ENCODE measurements at regions of chr6 and their contacts with region 1.

Region 1: DNA sequence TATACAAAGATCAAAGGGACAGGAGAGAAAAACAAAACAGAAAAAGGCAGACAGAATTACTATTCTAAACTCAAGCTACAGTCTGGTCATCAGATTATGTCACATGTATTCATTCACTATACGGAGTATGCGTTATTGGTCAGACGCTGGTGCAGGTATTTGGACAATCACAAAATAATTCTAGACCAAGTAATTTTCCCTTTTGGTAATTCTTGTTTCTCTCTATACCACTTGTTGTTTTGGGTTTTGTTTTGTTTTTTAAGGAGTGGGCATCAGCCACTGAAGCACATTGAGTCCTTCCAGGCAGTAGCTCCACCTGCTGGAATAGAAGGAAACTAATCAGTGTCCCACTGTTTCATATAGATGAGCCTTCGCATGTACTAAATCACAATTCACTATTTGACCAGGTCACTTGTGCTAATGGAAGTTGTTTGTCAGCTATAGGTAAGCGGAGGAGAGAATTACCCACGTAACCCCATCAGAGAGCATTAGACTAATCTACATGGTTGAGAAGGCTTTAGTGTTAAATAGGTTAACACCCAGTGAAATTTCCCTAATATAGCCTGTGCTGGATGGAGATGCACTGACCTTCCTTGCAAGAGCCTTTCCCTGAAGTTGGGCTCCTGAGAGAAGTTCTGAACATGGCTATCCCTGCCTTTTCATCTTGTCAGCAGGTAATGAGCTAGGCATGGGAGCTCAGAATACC is 77.9 kb downstream of the TNFAIP3 start:
- DNase-seq: peak in 4 of 5 donors; percentile 41 to 56 (median 48)
- H3K4me3 ChIP-seq: no peak overlapping the region
- H3K4me3 Mint-ChIP-seq: peak overlapping the region in 1 of 8 donors; percentile 12
- H3K27ac ChIP-seq: no peak overlapping the region
- H3K27ac Mint-ChIP-seq: peak overlapping the region in 5 of 7 donors; percentile 10 to 67 (median 63)
- H3K4me1 ChIP-seq: peaks cover 16% of the 10 kb centered on the region
- H3K4me1 Mint-ChIP-seq: peaks cover 13 to 22% (median 19%) of the 10 kb centered on the region in 4 donors
- H3K27me3 ChIP-seq: no peaks in the 10 kb centered on the region
- H3K27me3 Mint-ChIP-seq: no peaks in the 10 kb centered on the region

Region 2: GRCh38 chr6:137661601-137662000 is 283.3 kb before region 1 on chr6:
- CTCF ChIA-PET with region 1: interaction called, 10 read pairs
- POLR2A ChIA-PET with region 1: no interaction called
- intact Hi-C with region 1: no loop called
- DNase-seq: peak in 3 of 5 donors; percentile 40 to 45 (median 45)
- H3K4me3 ChIP-seq: no peak overlapping the region
- H3K4me3 Mint-ChIP-seq: no peak overlapping the region
- H3K27ac ChIP-seq: no peak overlapping the region
- H3K27ac Mint-ChIP-seq: peak overlapping the region in 1 of 7 donors; percentile 51
- H3K4me1 ChIP-seq: no peaks in the 10 kb centered on the region
- H3K4me1 Mint-ChIP-seq: peaks cover 0 to 3% (median under 1%) of the 10 kb centered on the region in 4 donors
- H3K27me3 ChIP-seq: no peaks in the 10 kb centered on the region
- H3K27me3 Mint-ChIP-seq: peaks cover 0 to 4% of the 10 kb centered on the region in 2 donors

Region 3: DNA sequence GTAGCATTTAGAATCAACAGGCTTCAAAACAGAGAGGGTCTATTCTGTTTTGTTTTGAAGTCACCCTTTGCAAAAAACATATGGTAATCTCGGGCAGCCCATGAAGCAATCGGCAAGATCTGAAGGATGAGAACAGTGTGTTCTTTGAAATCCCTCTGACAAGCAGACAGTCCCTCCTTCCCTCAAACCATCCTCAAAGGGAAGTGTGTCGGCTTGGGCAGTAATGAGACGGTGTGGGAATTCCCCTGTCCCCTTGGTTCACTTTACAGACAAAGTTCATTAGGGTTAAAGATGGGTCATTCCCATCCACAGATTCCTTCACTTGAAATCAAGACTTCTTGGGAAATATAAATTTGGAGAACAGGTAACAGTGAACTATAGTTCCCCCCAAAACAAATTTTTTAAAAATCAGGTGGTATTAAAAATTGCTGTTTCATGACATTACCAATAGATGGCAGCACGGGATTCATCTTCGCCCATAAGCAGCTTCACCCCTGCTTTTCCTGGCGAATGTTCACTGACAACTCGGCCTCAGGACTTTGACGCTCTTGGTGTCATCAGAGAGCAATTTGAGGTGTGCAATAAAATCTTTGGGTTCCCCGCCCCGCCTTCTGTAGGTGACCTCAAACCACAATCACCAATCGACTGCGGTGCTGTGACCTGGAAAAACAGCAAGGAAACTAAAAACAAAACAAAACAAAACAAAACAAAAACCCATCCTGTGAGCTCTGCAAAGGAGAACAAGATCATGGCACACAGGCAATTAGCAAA is 237.2 kb before region 1 on chr6:
- CTCF ChIA-PET with region 1: interaction called, 74 read pairs
- POLR2A ChIA-PET with region 1: interaction called, 9 read pairs
- intact Hi-C with region 1: loop called (anchors 1 kb)
- DNase-seq: peak; percentile 91 to 97 (median 96)
- H3K4me3 ChIP-seq: peak overlapping the region in 1 of 2 donors; percentile 36
- H3K4me3 Mint-ChIP-seq: peak overlapping the region; percentile 58 to 80 (median 72)
- H3K27ac ChIP-seq: peak overlapping the region; percentile 77
- H3K27ac Mint-ChIP-seq: peak overlapping the region; percentile 93 to 99 (median 98)
- H3K4me1 ChIP-seq: peaks cover 68% of the 10 kb centered on the region
- H3K4me1 Mint-ChIP-seq: peaks cover 39 to 70% (median 57%) of the 10 kb centered on the region in 4 donors
- H3K27me3 ChIP-seq: no peaks in the 10 kb centered on the region
- H3K27me3 Mint-ChIP-seq: peaks cover 0 to under 1% of the 10 kb centered on the region in 2 donors

Region 4: DNA sequence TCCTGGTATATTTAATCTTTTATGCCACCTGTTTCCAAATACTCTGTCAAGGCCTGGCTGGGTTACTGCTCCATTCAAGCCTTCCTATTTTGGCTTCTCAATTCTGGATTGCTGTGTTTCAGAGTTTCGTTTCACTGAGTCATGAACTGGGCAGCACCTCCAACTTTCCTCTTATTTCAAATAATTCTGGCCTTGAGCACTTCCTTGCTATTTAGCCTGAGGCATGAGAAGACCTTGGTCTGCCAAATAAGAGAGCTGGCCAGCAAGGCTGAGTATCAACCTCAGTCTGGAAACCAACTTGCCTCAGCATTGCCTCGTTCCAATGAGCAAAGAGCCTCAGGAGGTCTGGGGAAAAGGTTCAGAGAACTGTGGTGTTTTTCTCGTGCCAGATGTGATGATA is 11.2 kb before region 1 on chr6:
- CTCF ChIA-PET with region 1: interaction called, 23 read pairs
- POLR2A ChIA-PET with region 1: no interaction called
- intact Hi-C with region 1: no loop called
- DNase-seq: no peak
- H3K4me3 ChIP-seq: no peak overlapping the region
- H3K4me3 Mint-ChIP-seq: no peak overlapping the region
- H3K27ac ChIP-seq: no peak overlapping the region
- H3K27ac Mint-ChIP-seq: no peak overlapping the region
- H3K4me1 ChIP-seq: peaks cover 3% of the 10 kb centered on the region
- H3K4me1 Mint-ChIP-seq: peaks cover 1 to 2% (median 2%) of the 10 kb centered on the region in 4 donors
- H3K27me3 ChIP-seq: no peaks in the 10 kb centered on the region
- H3K27me3 Mint-ChIP-seq: no peaks in the 10 kb centered on the region

Region 5: DNA sequence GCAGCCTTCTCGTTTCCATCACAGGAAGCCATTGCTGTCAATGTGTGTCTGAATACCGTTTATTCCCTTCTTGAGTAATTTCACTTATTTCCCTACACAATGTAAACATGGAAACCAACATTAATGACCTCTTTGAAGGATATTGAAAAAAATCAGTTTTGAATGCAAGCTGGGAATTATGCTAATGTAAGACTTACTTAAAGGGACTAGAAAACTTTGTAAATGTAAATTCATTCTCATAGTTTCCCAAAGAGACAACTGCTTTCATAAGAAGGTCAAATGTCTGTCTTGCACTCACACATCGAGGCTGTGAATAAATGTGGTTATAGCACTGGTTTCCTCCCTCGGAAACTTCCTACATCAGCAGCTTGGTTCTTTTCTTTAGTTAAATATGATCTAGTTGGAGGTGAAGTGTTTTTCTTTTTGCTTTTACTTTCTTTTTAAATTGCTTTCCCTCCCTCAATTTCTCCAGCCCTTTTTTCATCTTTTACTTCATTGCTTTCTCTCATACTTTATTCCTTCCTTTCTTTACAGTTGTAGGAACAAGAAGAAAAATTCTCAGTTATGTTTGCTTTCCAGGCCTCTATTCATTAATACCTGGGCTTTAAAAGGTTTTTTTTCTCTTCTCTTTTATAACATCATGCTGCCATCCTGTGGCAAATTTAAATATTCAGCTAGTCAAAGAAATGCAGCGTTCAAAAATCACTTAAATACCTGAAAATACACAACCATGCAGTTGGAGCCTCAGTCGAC is 30.4 kb after region 1 on chr6:
- CTCF ChIA-PET with region 1: interaction called, 31 read pairs
- POLR2A ChIA-PET with region 1: interaction called, 6 read pairs
- intact Hi-C with region 1: loop called (anchors 1 kb)
- DNase-seq: peak; percentile 62 to 71 (median 67)
- H3K4me3 ChIP-seq: no peak overlapping the region
- H3K4me3 Mint-ChIP-seq: peak overlapping the region; percentile 67 to 93 (median 82)
- H3K27ac ChIP-seq: peak overlapping the region; percentile 57
- H3K27ac Mint-ChIP-seq: peak overlapping the region; percentile 87 to 99 (median 97)
- H3K4me1 ChIP-seq: peaks cover 37% of the 10 kb centered on the region
- H3K4me1 Mint-ChIP-seq: peaks cover 30 to 57% (median 34%) of the 10 kb centered on the region in 4 donors
- H3K27me3 ChIP-seq: no peaks in the 10 kb centered on the region
- H3K27me3 Mint-ChIP-seq: no peaks in the 10 kb centered on the region

Measured in CD4-positive, alpha-beta memory T cell (primary cell).